HEK293 (cell line): ENCODE measurements at regions of chr18 and their contacts with region 1.

Region 1: GRCh38 chr18:45384137-45384961 is 230.9 kb upstream of the SLC14A2 start:
- H3K4me3 ChIP-seq: no peak overlapping the region
- H3K27ac ChIP-seq: no peak overlapping the region
- H3K4me1 ChIP-seq: peaks cover 7% of the 10 kb centered on the region
- CTCF ChIP-seq: peak; percentile 57

Region 2: GRCh38 chr18:44130376-44130942 is 1253.9 kb before region 1 on chr18:
- CTCF ChIA-PET with region 1: interaction called, 23 read pairs
- POLR2A ChIA-PET with region 1: interaction called, 3 read pairs
- H3K4me3 ChIP-seq: no peak overlapping the region
- H3K27ac ChIP-seq: no peak overlapping the region
- H3K4me1 ChIP-seq: no peaks in the 10 kb centered on the region
- CTCF ChIP-seq: peak; percentile 51

Region 3: DNA sequence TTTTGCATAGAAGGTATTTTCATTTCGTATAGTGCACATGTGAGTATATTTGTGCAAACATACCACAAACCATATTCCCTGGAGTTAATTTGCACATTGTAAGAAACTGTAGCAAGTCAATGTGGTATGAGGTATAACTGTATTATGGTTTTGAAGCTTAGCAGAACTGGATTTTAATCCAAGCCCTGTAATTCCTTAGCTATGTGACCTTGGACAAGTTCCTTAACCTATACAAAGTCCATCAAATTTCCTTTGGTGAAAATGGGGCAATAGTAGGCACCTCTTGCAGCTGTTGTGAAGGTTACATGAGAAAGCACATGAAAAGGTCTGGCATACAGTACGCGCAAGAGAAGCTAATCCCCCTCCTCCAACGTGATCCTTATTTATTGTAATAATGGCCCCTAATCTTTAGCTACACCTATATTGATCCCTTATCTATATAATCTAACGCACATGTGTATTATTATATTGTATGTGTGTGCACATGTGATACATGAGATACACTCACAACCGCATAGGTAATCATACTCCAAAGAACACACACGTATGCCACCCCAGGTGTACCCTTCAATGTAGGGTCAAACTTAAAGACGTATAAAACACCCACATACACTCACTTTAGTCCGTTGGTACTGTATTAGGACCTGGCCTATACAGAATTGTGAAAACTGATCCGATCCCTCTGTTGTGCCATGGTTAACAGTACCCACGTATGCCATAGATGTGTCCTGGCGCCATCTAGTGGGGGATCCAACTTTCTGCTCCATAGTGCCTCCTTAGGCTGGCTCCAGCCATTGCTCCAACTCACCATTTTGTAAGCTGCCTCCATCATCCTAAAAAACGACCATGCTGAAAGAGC is 171.9 kb before region 1 on chr18:
- CTCF ChIA-PET with region 1: interaction called, 17 read pairs
- POLR2A ChIA-PET with region 1: no interaction called
- H3K4me3 ChIP-seq: no peak overlapping the region
- H3K27ac ChIP-seq: no peak overlapping the region
- H3K4me1 ChIP-seq: no peaks in the 10 kb centered on the region
- CTCF ChIP-seq: peak; percentile 88

Region 4: DNA sequence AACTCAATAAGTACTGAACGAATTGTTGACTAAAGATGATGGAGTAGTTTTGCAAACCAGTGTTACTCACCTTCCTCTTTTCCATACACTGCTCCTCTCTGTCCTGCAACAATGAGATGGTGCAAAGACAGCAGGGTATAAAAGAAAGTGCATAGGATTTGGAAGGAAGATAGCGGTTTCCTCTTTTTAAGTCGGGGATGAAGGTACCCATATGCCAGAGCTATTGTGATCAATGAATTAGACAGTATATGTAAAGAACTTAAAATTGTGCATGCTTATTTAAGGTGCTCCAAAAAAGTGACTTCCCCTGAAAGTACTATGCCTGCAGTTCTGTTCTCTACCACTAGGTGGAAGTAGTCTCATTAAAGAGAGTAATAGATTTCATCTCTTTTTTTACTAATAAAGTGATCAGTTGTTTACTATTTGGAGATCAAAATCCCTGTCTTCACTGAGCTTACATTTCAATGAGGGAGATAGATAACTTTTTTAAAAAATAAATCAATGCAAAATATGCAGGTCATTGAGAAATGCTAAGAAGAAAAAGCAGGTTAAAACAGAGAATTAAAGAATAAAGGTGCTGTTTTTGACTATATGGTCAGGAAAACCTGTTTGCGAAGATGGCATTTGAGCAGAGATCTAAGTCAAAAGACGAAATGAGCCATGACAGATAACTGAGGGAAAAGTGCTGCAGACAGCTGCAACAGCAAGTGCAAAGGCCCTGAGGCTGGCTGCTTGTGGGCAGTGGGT is 108.8 kb before region 1 on chr18:
- CTCF ChIA-PET with region 1: interaction called, 98 read pairs
- POLR2A ChIA-PET with region 1: no interaction called
- H3K4me3 ChIP-seq: no peak overlapping the region
- H3K27ac ChIP-seq: no peak overlapping the region
- H3K4me1 ChIP-seq: no peaks in the 10 kb centered on the region
- CTCF ChIP-seq: no peak

Region 5: DNA sequence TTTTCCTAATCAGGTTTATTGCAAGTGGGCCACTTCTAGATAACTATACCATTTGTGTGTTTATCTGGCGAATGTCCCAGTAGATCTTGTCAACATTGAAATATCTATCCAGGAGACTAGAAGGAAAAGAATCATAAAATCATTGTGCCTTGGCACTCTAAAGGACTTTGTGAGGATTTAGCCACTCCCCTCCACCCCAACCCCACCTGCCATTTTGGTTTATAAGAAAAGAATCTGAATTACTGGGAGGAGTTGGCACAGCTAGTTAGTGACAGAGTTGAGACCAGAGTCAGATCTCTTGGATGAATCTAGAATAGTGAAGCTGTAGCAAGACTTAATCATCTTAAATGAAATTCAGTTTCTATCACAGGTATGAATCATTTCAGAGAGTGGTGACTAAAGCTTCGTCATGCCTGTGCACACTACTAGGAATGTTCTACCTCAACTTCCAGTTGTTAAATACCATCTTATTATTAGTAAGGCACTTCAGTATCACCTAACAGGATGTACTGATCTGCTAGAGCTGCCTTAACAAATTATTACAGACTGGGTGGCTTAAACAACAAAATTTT is 18.2 kb after region 1 on chr18:
- CTCF ChIA-PET with region 1: interaction called, 11 read pairs
- POLR2A ChIA-PET with region 1: no interaction called
- H3K4me3 ChIP-seq: no peak overlapping the region
- H3K27ac ChIP-seq: no peak overlapping the region
- H3K4me1 ChIP-seq: no peaks in the 10 kb centered on the region
- CTCF ChIP-seq: no peak

Region 6: DNA sequence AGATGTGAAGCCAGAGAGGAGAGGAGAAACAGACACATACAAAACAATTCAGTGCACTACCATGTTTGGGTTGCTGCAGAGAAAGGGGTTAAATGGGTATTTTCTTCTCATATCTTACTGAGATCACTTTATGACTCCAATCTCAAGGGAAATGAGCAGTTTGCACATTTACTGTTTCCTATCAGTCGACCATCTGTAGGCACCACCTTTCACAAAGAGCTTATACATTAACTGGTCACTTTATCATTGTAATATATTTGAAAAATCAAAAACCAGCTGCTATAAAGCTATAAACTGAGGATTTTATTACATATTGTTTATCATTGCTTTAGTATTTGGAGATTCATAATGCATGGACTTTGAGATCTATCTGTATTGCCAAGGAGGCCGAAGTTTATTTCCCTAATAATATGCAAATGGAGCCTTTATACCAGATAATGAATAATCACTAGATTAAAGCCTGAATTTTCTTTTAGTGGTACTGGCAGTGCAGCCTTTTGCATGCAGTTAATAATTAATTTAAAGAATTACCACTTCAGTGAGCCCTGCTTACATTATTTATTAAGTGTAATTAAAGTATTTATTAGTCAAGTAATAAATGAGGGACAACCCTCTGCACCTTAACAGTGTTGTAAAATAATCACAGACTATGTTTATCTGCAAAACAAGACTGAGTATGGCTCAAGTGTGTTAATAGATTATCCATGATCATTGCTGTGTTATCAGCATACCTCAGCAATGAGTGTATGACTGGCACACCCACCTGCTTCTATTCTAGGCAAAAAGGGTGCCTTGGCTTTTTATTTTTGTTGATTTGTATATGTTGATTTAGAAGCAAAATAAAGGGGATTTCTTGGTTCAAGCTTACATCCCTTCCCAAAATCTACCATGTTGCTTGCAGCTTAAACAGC is 63.3 kb after region 1 on chr18:
- CTCF ChIA-PET with region 1: no interaction called
- POLR2A ChIA-PET with region 1: no interaction called
- H3K4me3 ChIP-seq: no peak overlapping the region
- H3K27ac ChIP-seq: no peak overlapping the region
- H3K4me1 ChIP-seq: no peaks in the 10 kb centered on the region
- CTCF ChIP-seq: no peak

Region 7: GRCh38 chr18:45526114-45526841 is 141.9 kb after region 1 on chr18:
- CTCF ChIA-PET with region 1: interaction called, 12 read pairs
- POLR2A ChIA-PET with region 1: no interaction called
- H3K4me3 ChIP-seq: no peak overlapping the region
- H3K27ac ChIP-seq: no peak overlapping the region
- H3K4me1 ChIP-seq: peaks cover 2% of the 10 kb centered on the region; the same call in 1 of the 2 replicates
- CTCF ChIP-seq: peak; percentile 10; the same call in 1 of the 2 replicates